Mammary epithelial cell (primary cell): ENCODE measurements at regions of chr5 and their contacts with region 1.

Region 1: DNA sequence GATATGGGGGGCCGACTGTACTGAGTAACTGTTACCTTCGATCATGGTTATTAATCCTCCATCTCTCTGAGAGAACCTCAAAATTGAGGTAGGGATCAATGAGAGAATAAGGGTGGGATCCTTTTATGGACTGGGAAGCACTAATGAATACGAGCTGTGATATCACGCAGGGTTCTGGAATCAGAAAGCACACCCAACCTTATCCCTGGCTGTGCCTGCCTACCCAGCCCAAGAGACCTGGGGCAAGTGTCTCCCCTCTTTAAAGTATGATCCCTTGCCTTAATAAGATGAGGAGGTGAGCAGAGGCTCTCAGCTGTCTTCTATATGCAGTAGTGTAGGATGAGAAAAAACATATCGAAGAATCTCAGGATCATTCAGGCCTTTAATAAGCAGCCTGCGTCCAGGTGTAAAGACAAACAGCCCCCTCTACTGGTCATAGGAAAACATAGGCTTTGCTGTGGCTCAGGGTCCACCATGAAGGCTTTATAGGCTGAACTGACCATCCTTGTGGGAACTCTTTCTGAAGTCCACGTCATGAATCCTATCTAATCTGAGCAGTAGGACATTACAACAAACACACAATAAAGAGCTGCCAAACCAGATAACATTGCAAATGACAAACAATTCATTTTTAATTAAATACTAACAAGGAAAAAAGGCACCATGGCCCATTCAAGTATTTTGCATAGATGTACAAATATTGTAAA is 16.8 kb downstream of the NIPAL4 start:
- DNase-seq: peak; percentile 37
- H3K4me3 ChIP-seq: no peak overlapping the region
- H3K27ac ChIP-seq: no peak overlapping the region
- H3K4me1 ChIP-seq: no peaks in the 10 kb centered on the region
- H3K27me3 ChIP-seq: no peaks in the 10 kb centered on the region
- CTCF ChIP-seq: peak; percentile 84 to 86

Region 2: DNA sequence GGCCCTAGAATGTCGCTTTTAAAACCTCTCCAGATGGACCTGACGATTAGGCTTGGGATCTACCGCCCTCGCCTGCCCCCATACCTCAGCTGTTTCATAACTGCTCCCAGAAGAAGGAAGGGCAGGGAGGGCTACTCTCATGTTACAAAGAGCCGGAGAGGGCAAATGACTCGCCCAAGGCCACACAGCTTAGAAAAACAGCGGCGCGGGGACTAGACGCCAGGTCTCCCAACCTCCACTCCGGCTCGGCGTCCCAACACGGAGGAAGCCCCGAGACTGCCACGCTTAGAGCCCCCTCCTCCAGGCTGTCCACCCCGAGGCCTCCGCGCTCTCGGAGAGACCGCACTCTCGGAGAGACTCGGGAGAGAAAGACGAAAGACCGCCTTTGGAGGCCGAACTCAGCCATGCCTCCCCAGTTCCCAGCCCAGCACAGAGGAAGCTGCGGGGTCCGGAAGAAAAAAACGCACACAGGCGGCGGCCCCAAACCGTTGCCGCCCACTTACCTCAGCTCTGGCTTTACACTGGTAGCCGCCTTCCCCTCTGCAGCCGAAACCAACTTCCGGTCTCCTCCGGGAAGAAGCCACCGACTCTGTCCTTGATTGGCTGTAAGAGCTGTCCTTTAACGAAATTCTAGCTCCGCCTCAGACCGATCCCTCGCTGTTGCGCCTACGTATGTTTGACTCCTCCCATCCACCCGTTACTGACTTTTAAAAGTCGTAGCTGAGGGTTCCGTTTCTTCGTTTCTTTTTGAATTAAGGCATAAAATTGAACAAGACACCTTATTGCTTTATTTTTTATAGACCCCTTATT is 334.3 kb before region 1 on chr5 and contains the start of gene MED7:
- CTCF ChIA-PET with region 1: no interaction called
- dilution Hi-C with region 1: no loop called
- in situ Hi-C with region 1: loop called in 1 of 2 experiments (anchors 10 kb)
- intact Hi-C with region 1: loop called (anchors 2 kb)
- DNase-seq: peak; percentile 97
- H3K4me3 ChIP-seq: peak within 1 kb of the TSS; percentile 72 to 98 (median 95)
- H3K27ac ChIP-seq: peak within 1 kb of the TSS; percentile 82
- H3K4me1 ChIP-seq: no peaks in the 10 kb centered on the region
- H3K27me3 ChIP-seq: no peaks in the 10 kb centered on the region
- CTCF ChIP-seq: no peak
- total RNA-seq, gene MED7: 9.5 to 10.2 TPM

Region 3: GRCh38 chr5:157328277-157328912 is 148.5 kb before region 1 on chr5:
- CTCF ChIA-PET with region 1: no interaction called
- dilution Hi-C with region 1: loop called (anchors 10 kb)
- in situ Hi-C with region 1: loop called in 1 of 2 experiments (anchors 5 kb)
- intact Hi-C with region 1: loop called (anchors 1 kb)
- DNase-seq: peak; percentile 52
- H3K4me3 ChIP-seq: peak overlapping the region in 1 of 3 experiments; percentile 34
- H3K27ac ChIP-seq: no peak overlapping the region
- H3K4me1 ChIP-seq: no peaks in the 10 kb centered on the region
- H3K27me3 ChIP-seq: no peaks in the 10 kb centered on the region
- CTCF ChIP-seq: peak; percentile 97

Region 4: GRCh38 chr5:157400741-157401495 is 75.9 kb before region 1 on chr5:
- CTCF ChIA-PET with region 1: no interaction called
- dilution Hi-C with region 1: loop called (anchors 5 kb)
- in situ Hi-C with region 1: no loop called
- intact Hi-C with region 1: no loop called
- DNase-seq: no peak
- H3K4me3 ChIP-seq: no peak overlapping the region
- H3K27ac ChIP-seq: no peak overlapping the region
- H3K4me1 ChIP-seq: no peaks in the 10 kb centered on the region
- H3K27me3 ChIP-seq: no peaks in the 10 kb centered on the region
- CTCF ChIP-seq: no peak

Region 5: GRCh38 chr5:157443041-157443549 is 33.8 kb before region 1 on chr5:
- CTCF ChIA-PET with region 1: no interaction called
- dilution Hi-C with region 1: no loop called
- in situ Hi-C with region 1: loop called in 1 of 2 experiments (anchors 5 kb)
- intact Hi-C with region 1: no loop called
- DNase-seq: no peak
- H3K4me3 ChIP-seq: no peak overlapping the region
- H3K27ac ChIP-seq: no peak overlapping the region
- H3K4me1 ChIP-seq: no peaks in the 10 kb centered on the region
- H3K27me3 ChIP-seq: no peaks in the 10 kb centered on the region
- CTCF ChIP-seq: no peak

Region 6: GRCh38 chr5:157743163-157744050 is 266.6 kb after region 1 on chr5 and contains the start of gene LSM11:
- CTCF ChIA-PET with region 1: no interaction called
- dilution Hi-C with region 1: no loop called
- in situ Hi-C with region 1: no loop called
- intact Hi-C with region 1: loop called (anchors 1 kb)
- DNase-seq: peak; percentile 84
- H3K4me3 ChIP-seq: peak within 1 kb of the TSS; percentile 68 to 87 (median 80)
- H3K27ac ChIP-seq: peak within 1 kb of the TSS; percentile 51
- H3K4me1 ChIP-seq: peaks cover 11% of the 10 kb centered on the region
- H3K27me3 ChIP-seq: no peaks in the 10 kb centered on the region
- CTCF ChIP-seq: peak; percentile 92 to 99
- total RNA-seq, gene LSM11: 2.6 to 4.3 TPM

Region 7: GRCh38 chr5:157778121-157778805 is 301.4 kb after region 1 on chr5:
- CTCF ChIA-PET with region 1: no interaction called
- dilution Hi-C with region 1: no loop called
- in situ Hi-C with region 1: no loop called
- intact Hi-C with region 1: no loop called
- DNase-seq: peak; percentile 78
- H3K4me3 ChIP-seq: no peak overlapping the region
- H3K27ac ChIP-seq: no peak overlapping the region
- H3K4me1 ChIP-seq: no peaks in the 10 kb centered on the region
- H3K27me3 ChIP-seq: peaks cover 5% of the 10 kb centered on the region
- CTCF ChIP-seq: no peak

Region 8: DNA sequence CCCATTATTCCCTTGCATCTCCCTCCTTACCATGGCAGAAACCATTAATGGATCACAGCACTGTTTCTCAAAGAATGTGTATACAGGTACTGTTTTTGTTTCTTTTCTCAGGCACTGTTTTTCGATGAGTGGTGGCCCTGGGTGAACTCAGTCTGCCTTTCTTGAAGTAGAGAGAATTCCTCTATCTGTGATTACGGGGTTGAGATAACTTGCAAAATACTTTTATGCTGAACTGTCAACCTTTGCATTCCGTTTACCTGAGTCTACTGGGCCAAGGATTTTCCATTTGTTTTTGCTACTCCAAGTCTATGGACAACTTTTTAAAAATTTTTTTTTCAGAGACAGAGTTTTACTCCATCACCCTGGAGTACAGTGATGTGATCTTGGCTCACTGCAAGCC is 464.8 kb after region 1 on chr5:
- CTCF ChIA-PET with region 1: no interaction called
- dilution Hi-C with region 1: no loop called
- in situ Hi-C with region 1: no loop called
- intact Hi-C with region 1: no loop called
- DNase-seq: no peak
- H3K4me3 ChIP-seq: no peak overlapping the region
- H3K27ac ChIP-seq: no peak overlapping the region
- H3K4me1 ChIP-seq: no peaks in the 10 kb centered on the region
- H3K27me3 ChIP-seq: no peaks in the 10 kb centered on the region
- CTCF ChIP-seq: no peak